Naive thymus-derived CD4-positive, alpha-beta T cell (primary cell): ENCODE measurements at regions of chr9 and their contacts with region 1.

Region 1: DNA sequence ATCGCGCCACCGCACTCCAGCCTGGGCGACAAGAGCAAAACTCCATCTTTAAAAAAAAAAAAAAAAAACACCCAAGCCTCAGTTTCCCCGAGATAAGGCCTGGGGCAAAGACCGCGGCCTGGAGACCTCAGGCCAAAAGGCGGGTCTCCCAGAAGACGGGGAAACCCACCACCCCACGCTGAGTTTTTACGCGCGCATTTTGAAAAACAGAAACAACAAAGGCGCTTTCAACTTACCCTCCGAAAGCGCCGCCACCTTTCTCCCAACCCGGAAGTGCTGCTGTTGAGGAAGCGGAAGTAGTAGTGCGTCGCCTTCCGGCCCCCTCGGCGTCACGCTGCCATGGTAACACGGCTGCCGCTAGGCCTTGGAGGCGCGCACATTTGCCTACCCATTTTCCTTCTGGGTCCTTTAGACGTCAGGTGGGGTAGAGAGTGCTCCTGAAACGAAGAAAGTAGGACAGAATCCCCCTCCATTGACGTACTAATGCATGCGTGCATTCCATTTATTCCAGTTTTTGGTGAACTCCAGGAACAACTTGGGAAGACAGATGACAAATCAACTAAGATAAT is at the start of gene TTF1:
- DNase-seq: peak; percentile 86 to 96 (median 93)
- ATAC-seq: peak; percentile 89
- H3K4me3 ChIP-seq: peak within 1 kb of the TSS; percentile 64
- H3K4me3 Mint-ChIP-seq: peak within 1 kb of the TSS; percentile 77 to 97 (median 92)
- H3K27ac ChIP-seq: peak within 1 kb of the TSS; percentile 74
- H3K27ac Mint-ChIP-seq: peak within 1 kb of the TSS; percentile 77 to 97 (median 90)
- H3K4me1 ChIP-seq: peaks cover 23 to 51% of the 10 kb centered on the region in 2 donors
- H3K4me1 Mint-ChIP-seq: peaks cover 42 to 62% (median 55%) of the 10 kb centered on the region in 7 donors
- H3K27me3 ChIP-seq: peaks cover 0 to 4% of the 10 kb centered on the region in 2 donors
- H3K27me3 Mint-ChIP-seq: peaks cover 10 to 27% (median 10%) of the 10 kb centered on the region in 5 donors
- total RNA-seq, gene TTF1: 10.6 to 26.0 (median 20.1) TPM

Region 2: GRCh38 chr9:132079391-132080091 is 327.1 kb before region 1 on chr9 and contains the start of gene MED27:
- CTCF ChIA-PET with region 1: no interaction called
- POLR2A ChIA-PET with region 1: no interaction called
- intact Hi-C with region 1: loop called in 1 of 2 experiments (anchors 1 kb)
- DNase-seq: peak; percentile 79 to 94 (median 90)
- ATAC-seq: peak; percentile 98
- H3K4me3 ChIP-seq: peak within 1 kb of the TSS; percentile 77
- H3K4me3 Mint-ChIP-seq: peak within 1 kb of the TSS; percentile 93 to 99 (median 98)
- H3K27ac ChIP-seq: peak within 1 kb of the TSS; percentile 72
- H3K27ac Mint-ChIP-seq: peak within 1 kb of the TSS; percentile 69 to 96 (median 92)
- H3K4me1 ChIP-seq: peaks cover 13 to 15% of the 10 kb centered on the region in 2 donors
- H3K4me1 Mint-ChIP-seq: peaks cover 31 to 53% (median 49%) of the 10 kb centered on the region in 7 donors
- H3K27me3 ChIP-seq: no peaks in the 10 kb centered on the region
- H3K27me3 Mint-ChIP-seq: peaks cover 0 to 7% (median 4%) of the 10 kb centered on the region in 5 donors
- total RNA-seq, gene MED27: 11.5 to 26.9 (median 21.3) TPM

Region 3: DNA sequence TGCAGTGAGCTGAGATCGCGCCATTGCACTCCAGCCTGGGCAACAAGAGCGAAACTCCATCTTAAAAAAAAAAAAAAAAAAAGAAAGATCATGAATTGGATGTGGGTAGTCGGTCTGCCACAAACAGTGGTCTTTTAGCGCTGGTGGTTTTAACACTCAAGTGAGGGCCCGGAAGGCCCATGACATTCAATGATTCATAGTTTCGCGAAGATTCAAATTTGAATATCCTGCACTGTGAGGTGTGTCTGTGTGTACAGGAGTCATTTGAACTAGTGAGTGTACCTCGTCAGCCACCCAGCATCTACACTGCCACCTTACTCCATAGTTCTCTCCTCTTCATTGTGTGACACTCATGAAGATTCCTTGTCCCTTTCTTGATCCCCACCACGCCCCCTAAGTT is 44.6 kb after region 1 on chr9:
- CTCF ChIA-PET with region 1: no interaction called
- POLR2A ChIA-PET with region 1: no interaction called
- intact Hi-C with region 1: no loop called
- DNase-seq: no peak
- ATAC-seq: peak; percentile 80
- H3K4me3 ChIP-seq: no peak overlapping the region
- H3K4me3 Mint-ChIP-seq: peak overlapping the region in 1 of 10 donors; percentile 29
- H3K27ac ChIP-seq: no peak overlapping the region
- H3K27ac Mint-ChIP-seq: peak overlapping the region in 1 of 9 donors; percentile 38
- H3K4me1 ChIP-seq: peaks cover 0 to 8% of the 10 kb centered on the region in 2 donors
- H3K4me1 Mint-ChIP-seq: peaks cover 0 to 8% (median 0%) of the 10 kb centered on the region in 7 donors
- H3K27me3 ChIP-seq: peaks cover 0 to 3% of the 10 kb centered on the region in 2 donors
- H3K27me3 Mint-ChIP-seq: peaks cover 4 to 26% (median 15%) of the 10 kb centered on the region in 5 donors

Region 4: GRCh38 chr9:132486706-132487350 is 80.2 kb after region 1 on chr9:
- CTCF ChIA-PET with region 1: no interaction called
- POLR2A ChIA-PET with region 1: no interaction called
- intact Hi-C with region 1: loop called in 1 of 2 experiments (anchors 5 kb)
- DNase-seq: peak in 3 of 9 donors; percentile 6 to 44 (median 38)
- ATAC-seq: peak; percentile 81
- H3K4me3 ChIP-seq: no peak overlapping the region
- H3K4me3 Mint-ChIP-seq: peak overlapping the region; percentile 35 to 79 (median 71)
- H3K27ac ChIP-seq: no peak overlapping the region
- H3K27ac Mint-ChIP-seq: peak overlapping the region in 8 of 9 donors; percentile 18 to 89 (median 78)
- H3K4me1 ChIP-seq: peaks cover 22 to 23% of the 10 kb centered on the region in 2 donors
- H3K4me1 Mint-ChIP-seq: peaks cover 17 to 36% (median 26%) of the 10 kb centered on the region in 7 donors
- H3K27me3 ChIP-seq: peaks cover 0 to 8% of the 10 kb centered on the region in 2 donors
- H3K27me3 Mint-ChIP-seq: peaks cover 44 to 71% (median 50%) of the 10 kb centered on the region in 5 donors

Region 5: DNA sequence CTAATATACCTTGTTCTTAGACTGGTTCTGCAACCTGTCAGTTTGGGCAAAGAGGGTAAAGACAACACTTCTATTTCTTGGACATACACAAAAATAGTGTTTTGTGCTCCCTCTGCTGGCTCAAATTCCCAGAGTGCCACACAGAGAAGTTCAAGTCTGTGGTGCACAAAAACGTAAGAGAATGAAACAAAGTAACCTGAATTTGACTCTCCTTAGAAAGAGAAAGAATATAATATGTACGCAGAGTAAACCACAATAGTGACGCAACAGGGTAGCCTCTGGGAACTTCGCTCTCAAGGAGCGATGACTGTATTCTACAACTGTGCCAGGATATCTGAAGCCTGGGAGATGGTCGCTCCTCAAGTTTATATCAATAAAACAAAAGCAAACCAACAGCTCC is 244.6 kb after region 1 on chr9:
- CTCF ChIA-PET with region 1: no interaction called
- POLR2A ChIA-PET with region 1: no interaction called
- intact Hi-C with region 1: loop called in 1 of 2 experiments (anchors 5 kb)
- DNase-seq: no peak
- ATAC-seq: no peak
- H3K4me3 ChIP-seq: no peak overlapping the region
- H3K4me3 Mint-ChIP-seq: no peak overlapping the region
- H3K27ac ChIP-seq: no peak overlapping the region
- H3K27ac Mint-ChIP-seq: no peak overlapping the region
- H3K4me1 ChIP-seq: no peaks in the 10 kb centered on the region
- H3K4me1 Mint-ChIP-seq: peaks cover 4 to 8% (median 5%) of the 10 kb centered on the region in 7 donors
- H3K27me3 ChIP-seq: no peaks in the 10 kb centered on the region
- H3K27me3 Mint-ChIP-seq: no peaks in the 10 kb centered on the region

Region 6: DNA sequence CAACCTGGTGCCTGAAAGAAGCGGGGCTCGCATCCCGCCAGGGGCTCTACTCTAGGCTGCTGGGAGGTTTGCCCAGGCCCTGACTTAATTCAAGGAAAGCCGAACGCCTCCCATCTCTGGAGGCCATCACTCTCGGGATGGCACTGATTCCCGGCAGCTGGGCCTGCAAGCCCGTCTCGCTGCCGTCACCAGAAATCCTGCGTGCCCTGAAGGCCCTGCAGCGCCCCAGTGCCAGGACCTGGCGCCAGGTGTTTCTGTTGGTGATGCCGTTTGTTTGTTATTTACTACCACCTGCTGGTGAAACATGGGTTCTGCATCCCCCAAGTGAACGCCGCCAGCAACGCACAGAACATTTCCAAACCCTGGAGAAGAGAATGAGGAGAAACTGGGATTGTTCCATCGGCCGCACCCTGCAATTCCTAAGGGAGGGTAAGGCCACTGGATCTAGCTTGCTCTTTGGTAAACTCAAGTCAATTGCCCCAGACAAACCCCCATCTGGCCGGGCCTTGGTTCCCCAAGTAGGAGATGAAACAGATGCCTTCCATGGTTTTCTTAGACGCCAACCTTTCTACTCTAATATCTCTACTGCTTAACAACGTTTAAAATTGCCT is 393.5 kb after region 1 on chr9:
- CTCF ChIA-PET with region 1: interaction called, 3 read pairs
- POLR2A ChIA-PET with region 1: no interaction called
- intact Hi-C with region 1: loop called in 1 of 2 experiments (anchors 1 kb)
- DNase-seq: peak; percentile 37 to 74 (median 66)
- ATAC-seq: peak; percentile 88
- H3K4me3 ChIP-seq: no peak overlapping the region
- H3K4me3 Mint-ChIP-seq: no peak overlapping the region
- H3K27ac ChIP-seq: no peak overlapping the region
- H3K27ac Mint-ChIP-seq: no peak overlapping the region
- H3K4me1 ChIP-seq: peaks cover 4 to 13% of the 10 kb centered on the region in 2 donors
- H3K4me1 Mint-ChIP-seq: peaks cover 0 to 10% (median 4%) of the 10 kb centered on the region in 7 donors
- H3K27me3 ChIP-seq: no peaks in the 10 kb centered on the region
- H3K27me3 Mint-ChIP-seq: peaks cover 8 to 59% (median 34%) of the 10 kb centered on the region in 5 donors

Region 7: GRCh38 chr9:132973713-132974112 is 567.1 kb after region 1 on chr9:
- CTCF ChIA-PET with region 1: no interaction called
- POLR2A ChIA-PET with region 1: no interaction called
- intact Hi-C with region 1: loop called in 1 of 2 experiments (anchors 5 kb)
- DNase-seq: no peak
- ATAC-seq: no peak
- H3K4me3 ChIP-seq: no peak overlapping the region
- H3K4me3 Mint-ChIP-seq: no peak overlapping the region
- H3K27ac ChIP-seq: no peak overlapping the region
- H3K27ac Mint-ChIP-seq: no peak overlapping the region
- H3K4me1 ChIP-seq: no peaks in the 10 kb centered on the region
- H3K4me1 Mint-ChIP-seq: peaks cover 5 to 12% (median 8%) of the 10 kb centered on the region in 7 donors
- H3K27me3 ChIP-seq: peaks cover 0 to 7% of the 10 kb centered on the region in 2 donors
- H3K27me3 Mint-ChIP-seq: peaks cover 12 to 34% (median 25%) of the 10 kb centered on the region in 5 donors